Mammary epithelial cell (primary cell): ENCODE measurements at regions of chr10 and their contacts with region 1.

Region 1: GRCh38 chr10:24617771-24618391 is 105.8 kb downstream of the ARHGAP21 start:
- DNase-seq: peak; percentile 17
- H3K4me3 ChIP-seq: no peak overlapping the region
- H3K27ac ChIP-seq: peak overlapping the region; percentile 55
- H3K4me1 ChIP-seq: peaks cover 43% of the 10 kb centered on the region
- H3K27me3 ChIP-seq: no peaks in the 10 kb centered on the region
- CTCF ChIP-seq: peak; percentile 87 to 90

Region 2: GRCh38 chr10:24652381-24652957 is 34.6 kb after region 1 on chr10:
- CTCF ChIA-PET with region 1: no interaction called
- dilution Hi-C with region 1: loop called (anchors 5 kb)
- in situ Hi-C with region 1: no loop called
- intact Hi-C with region 1: no loop called
- DNase-seq: no peak
- H3K4me3 ChIP-seq: no peak overlapping the region
- H3K27ac ChIP-seq: no peak overlapping the region
- H3K4me1 ChIP-seq: no peaks in the 10 kb centered on the region
- H3K27me3 ChIP-seq: no peaks in the 10 kb centered on the region
- CTCF ChIP-seq: no peak

Region 3: DNA sequence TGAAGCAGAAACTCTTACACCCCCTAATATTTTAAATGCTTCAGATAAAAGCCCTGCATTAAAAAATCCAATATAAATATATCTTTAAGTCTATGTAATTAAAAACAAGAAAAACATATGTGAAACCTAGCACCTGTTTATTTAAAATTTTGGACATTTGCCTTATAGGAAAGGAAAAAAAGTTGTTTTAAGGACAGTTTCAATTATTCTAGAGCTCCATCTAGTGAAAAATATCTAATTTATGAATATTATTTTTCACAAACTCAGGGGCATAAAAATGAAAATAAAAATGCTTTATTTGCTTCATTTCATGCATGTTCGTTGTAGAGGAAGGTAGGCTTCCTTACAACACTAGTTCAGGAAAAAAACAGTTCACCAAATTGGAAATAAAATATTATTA is 372.0 kb after region 1 on chr10:
- CTCF ChIA-PET with region 1: no interaction called
- dilution Hi-C with region 1: no loop called
- in situ Hi-C with region 1: no loop called
- intact Hi-C with region 1: loop called (anchors 1 kb)
- DNase-seq: no peak
- H3K4me3 ChIP-seq: no peak overlapping the region
- H3K27ac ChIP-seq: no peak overlapping the region
- H3K4me1 ChIP-seq: no peaks in the 10 kb centered on the region
- H3K27me3 ChIP-seq: no peaks in the 10 kb centered on the region
- CTCF ChIP-seq: no peak

Region 4: GRCh38 chr10:25059764-25060389 is 442.0 kb after region 1 on chr10:
- CTCF ChIA-PET with region 1: no interaction called
- dilution Hi-C with region 1: loop called (anchors 25 kb)
- in situ Hi-C with region 1: no loop called
- intact Hi-C with region 1: no loop called
- DNase-seq: peak; percentile 91
- H3K4me3 ChIP-seq: no peak overlapping the region
- H3K27ac ChIP-seq: peak overlapping the region; percentile 73
- H3K4me1 ChIP-seq: peaks cover 33% of the 10 kb centered on the region
- H3K27me3 ChIP-seq: no peaks in the 10 kb centered on the region
- CTCF ChIP-seq: no peak

Region 5: GRCh38 chr10:25080880-25081581 is 463.1 kb after region 1 on chr10:
- CTCF ChIA-PET with region 1: no interaction called
- dilution Hi-C with region 1: no loop called
- in situ Hi-C with region 1: no loop called
- intact Hi-C with region 1: loop called (anchors 10 kb)
- DNase-seq: peak; percentile 72
- H3K4me3 ChIP-seq: no peak overlapping the region
- H3K27ac ChIP-seq: no peak overlapping the region
- H3K4me1 ChIP-seq: no peaks in the 10 kb centered on the region
- H3K27me3 ChIP-seq: no peaks in the 10 kb centered on the region
- CTCF ChIP-seq: peak; percentile 87 to 95

Region 6: GRCh38 chr10:25174461-25175230 is 556.8 kb after region 1 on chr10 and contains the start of gene GPR158:
- CTCF ChIA-PET with region 1: no interaction called
- dilution Hi-C with region 1: no loop called
- in situ Hi-C with region 1: no loop called
- intact Hi-C with region 1: loop called (anchors 5 kb)
- DNase-seq: peak; percentile 91
- H3K4me3 ChIP-seq: peak within 1 kb of the TSS; percentile 48 to 51 (median 51)
- H3K27ac ChIP-seq: no peak within 1 kb of the TSS
- H3K4me1 ChIP-seq: peaks cover 5% of the 10 kb centered on the region
- H3K27me3 ChIP-seq: peaks cover 38% of the 10 kb centered on the region
- CTCF ChIP-seq: no peak
- total RNA-seq, gene GPR158: not detected